PC-3 (cell line): ENCODE measurements at regions of chr11 and their contacts with region 1.

Region 1: DNA sequence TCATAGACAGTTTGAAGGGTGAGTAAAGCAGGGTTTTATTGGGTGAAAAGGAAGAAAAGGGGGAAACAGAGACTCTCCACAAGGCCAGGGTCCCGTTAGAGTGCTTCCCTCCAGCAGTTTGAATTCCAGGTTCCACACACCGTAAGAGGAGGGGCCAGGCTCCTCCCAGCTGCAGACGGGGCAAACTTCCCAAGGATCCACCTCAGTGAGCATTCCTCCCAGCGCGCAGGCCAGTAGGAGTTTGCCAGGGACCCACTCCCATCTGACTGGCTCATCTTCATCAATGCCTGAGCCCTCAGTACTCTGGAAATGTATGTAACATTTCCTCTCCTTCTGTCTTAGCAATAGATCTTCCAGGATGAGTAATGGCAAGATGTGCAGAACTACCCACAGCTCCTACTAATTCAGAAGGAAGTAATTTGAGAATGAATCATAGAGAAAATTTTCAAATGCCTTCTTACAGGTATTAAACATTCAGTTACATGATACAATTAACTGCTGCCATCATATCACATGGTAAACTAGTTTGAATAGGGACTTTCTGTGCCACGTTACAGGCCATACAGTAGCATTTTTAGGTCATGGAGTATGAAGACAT is 34.0 kb upstream of the TRPC6 start:
- DNase-seq: peak; percentile 72
- ATAC-seq: peak; percentile 82
- H3K4me3 ChIP-seq: no peak overlapping the region
- H3K27ac ChIP-seq: peak overlapping the region; percentile 64
- H3K4me1 ChIP-seq: peaks cover 18% of the 10 kb centered on the region
- H3K27me3 ChIP-seq: peaks cover 4% of the 10 kb centered on the region; the same call in 1 of the 2 replicates
- CTCF ChIP-seq: no peak

Region 2: GRCh38 chr11:101478587-101479369 is 139.1 kb before region 1 on chr11:
- CTCF ChIA-PET with region 1: no interaction called
- POLR2A ChIA-PET with region 1: no interaction called
- intact Hi-C with region 1: loop called (anchors 10 kb)
- DNase-seq: no peak
- ATAC-seq: no peak
- H3K4me3 ChIP-seq: no peak overlapping the region
- H3K27ac ChIP-seq: no peak overlapping the region
- H3K4me1 ChIP-seq: no peaks in the 10 kb centered on the region
- H3K27me3 ChIP-seq: no peaks in the 10 kb centered on the region
- CTCF ChIP-seq: no peak

Region 3: DNA sequence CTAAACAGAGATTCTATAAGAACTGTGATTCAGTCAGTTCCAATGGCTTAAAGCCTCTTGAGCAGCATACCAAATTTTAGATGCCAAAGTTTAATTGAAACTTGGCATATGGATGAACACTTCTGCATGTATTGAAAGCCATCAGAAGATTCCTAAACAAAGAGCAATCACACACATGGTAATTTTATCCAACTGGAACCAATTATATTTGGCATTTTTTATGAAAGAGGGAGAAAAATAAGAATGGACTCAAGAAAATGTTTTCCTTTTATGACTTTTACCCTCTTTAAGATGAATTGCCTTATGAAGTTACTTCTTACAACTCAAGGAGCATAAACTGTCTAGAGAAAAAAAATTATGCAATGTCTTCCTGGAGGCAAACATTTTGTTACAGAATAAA is 41.4 kb before region 1 on chr11:
- CTCF ChIA-PET with region 1: no interaction called
- POLR2A ChIA-PET with region 1: no interaction called
- intact Hi-C with region 1: no loop called
- DNase-seq: no peak
- ATAC-seq: no peak
- H3K4me3 ChIP-seq: no peak overlapping the region
- H3K27ac ChIP-seq: no peak overlapping the region
- H3K4me1 ChIP-seq: no peaks in the 10 kb centered on the region
- H3K27me3 ChIP-seq: peaks cover 38% of the 10 kb centered on the region
- CTCF ChIP-seq: no peak

Region 4: GRCh38 chr11:101721270-101721669 is 103.4 kb after region 1 on chr11:
- CTCF ChIA-PET with region 1: no interaction called
- POLR2A ChIA-PET with region 1: no interaction called
- intact Hi-C with region 1: loop called (anchors 5 kb)
- DNase-seq: peak; percentile 79
- ATAC-seq: peak; percentile 73
- H3K4me3 ChIP-seq: no peak overlapping the region
- H3K27ac ChIP-seq: peak overlapping the region; percentile 35
- H3K4me1 ChIP-seq: peaks cover 44% of the 10 kb centered on the region
- H3K27me3 ChIP-seq: no peaks in the 10 kb centered on the region
- CTCF ChIP-seq: no peak